CD4-positive, alpha-beta T cell (primary cell): ENCODE measurements at regions of chr3 and their contacts with region 1.

Region 1: DNA sequence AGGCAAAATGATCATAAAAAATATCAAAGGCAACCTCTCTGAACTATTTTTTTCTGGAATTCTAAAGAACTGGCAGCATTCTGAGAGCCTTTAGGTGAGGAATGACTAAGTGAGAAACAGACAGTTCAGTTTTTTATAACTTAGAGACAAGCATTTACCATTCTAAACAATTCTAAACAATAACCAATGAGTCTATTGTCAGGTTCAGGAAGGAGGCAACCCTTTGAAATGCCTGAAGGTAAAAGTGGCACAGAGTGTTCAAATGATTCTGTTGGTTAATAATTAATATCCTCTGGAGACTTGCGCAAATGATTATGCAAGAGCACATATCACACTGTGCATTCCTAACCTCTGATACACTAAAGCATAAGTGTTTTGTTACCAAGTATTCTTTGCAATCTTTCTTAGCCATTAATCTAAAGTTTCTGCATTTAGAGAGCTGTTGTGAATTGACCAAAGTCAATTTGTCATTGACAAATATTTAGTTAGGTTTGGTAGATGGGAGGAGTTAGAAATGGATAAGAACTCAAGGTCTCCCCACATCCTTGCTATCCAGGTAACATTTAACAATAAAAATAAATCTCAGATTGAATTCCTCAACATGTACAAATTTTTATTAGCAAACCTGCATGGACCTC is 9.2 kb upstream of the TGFBR2 start:
- DNase-seq: no peak
- ATAC-seq: no peak
- H3K4me3 ChIP-seq: no peak overlapping the region
- H3K4me3 Mint-ChIP-seq: no peak overlapping the region
- H3K27ac ChIP-seq: no peak overlapping the region
- H3K27ac Mint-ChIP-seq: no peak overlapping the region
- H3K4me1 ChIP-seq: peaks cover 4% of the 10 kb centered on the region
- H3K4me1 Mint-ChIP-seq: peaks cover 41% of the 10 kb centered on the region
- H3K27me3 ChIP-seq: no peaks in the 10 kb centered on the region
- H3K27me3 Mint-ChIP-seq: no peaks in the 10 kb centered on the region
- CTCF ChIP-seq: no peak

Region 2: DNA sequence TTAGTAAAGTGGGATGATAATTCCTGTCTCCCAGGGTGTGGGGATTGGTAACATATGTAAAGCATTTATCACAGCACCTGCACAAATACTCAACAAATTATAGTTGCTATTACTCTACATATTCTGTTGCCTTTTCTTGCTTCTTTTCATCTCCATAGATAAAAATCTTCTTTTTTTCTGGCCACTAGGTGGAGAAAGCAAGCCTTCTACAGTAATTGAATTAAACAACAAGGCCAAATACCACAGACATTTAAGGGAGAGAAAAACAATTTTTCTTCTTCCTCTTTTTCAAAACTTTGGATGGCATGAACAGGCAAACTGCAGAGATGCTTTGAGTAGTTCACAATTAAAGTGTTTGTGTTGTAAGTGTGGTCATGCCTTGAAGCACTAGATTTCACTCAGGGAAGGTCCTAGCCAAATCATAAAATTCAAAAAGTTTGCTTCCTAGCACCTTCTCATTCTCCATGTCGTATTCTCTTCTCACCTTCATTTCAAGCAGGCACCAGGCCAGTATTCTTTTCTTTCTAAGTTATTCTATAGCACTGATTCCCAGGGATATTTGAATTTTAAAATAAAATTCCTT is 484.3 kb before region 1 on chr3:
- CTCF ChIA-PET with region 1: no interaction called
- POLR2A ChIA-PET with region 1: no interaction called
- intact Hi-C with region 1: loop called (anchors 5 to 10 kb)
- DNase-seq: peak in 3 of 14 experiments; percentile 56 to 57 (median 57)
- ATAC-seq: no peak
- H3K4me3 ChIP-seq: no peak overlapping the region
- H3K4me3 Mint-ChIP-seq: no peak overlapping the region
- H3K27ac ChIP-seq: no peak overlapping the region
- H3K27ac Mint-ChIP-seq: no peak overlapping the region
- H3K4me1 ChIP-seq: no peaks in the 10 kb centered on the region
- H3K4me1 Mint-ChIP-seq: peaks cover 7% of the 10 kb centered on the region
- H3K27me3 ChIP-seq: no peaks in the 10 kb centered on the region
- H3K27me3 Mint-ChIP-seq: peaks cover 5% of the 10 kb centered on the region
- CTCF ChIP-seq: peak; percentile 73

Region 3: DNA sequence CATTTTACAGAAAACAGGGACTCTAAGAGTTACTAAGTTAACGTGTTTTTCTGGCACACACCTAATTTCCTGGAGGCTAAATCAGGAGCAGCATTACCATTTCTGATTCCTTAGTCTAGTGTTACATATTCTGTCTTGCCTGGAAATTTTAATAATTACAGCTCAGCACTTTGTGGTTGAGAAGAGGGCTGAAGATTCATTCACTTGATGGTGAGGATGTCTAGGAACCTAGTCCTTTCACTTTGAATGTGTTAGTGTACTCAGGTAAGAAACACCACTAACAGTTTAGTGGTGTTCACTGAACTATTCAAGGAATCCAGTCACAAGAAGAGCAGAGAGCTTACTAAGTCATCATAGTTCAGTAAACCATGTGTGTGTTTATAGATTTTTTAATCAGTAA is 1038.3 kb after region 1 on chr3:
- CTCF ChIA-PET with region 1: no interaction called
- POLR2A ChIA-PET with region 1: no interaction called
- intact Hi-C with region 1: no loop called
- DNase-seq: peak in 1 of 14 experiments; percentile 6
- ATAC-seq: no peak
- H3K4me3 ChIP-seq: no peak overlapping the region
- H3K4me3 Mint-ChIP-seq: peak overlapping the region; percentile 46
- H3K27ac ChIP-seq: peak overlapping the region; percentile 5 to 18
- H3K27ac Mint-ChIP-seq: peak overlapping the region; percentile 55
- H3K4me1 ChIP-seq: peaks cover 3% of the 10 kb centered on the region
- H3K4me1 Mint-ChIP-seq: peaks cover 57% of the 10 kb centered on the region
- H3K27me3 ChIP-seq: no peaks in the 10 kb centered on the region
- H3K27me3 Mint-ChIP-seq: no peaks in the 10 kb centered on the region
- CTCF ChIP-seq: no peak